ENCODE measurements at regions of chr19 and their contacts with region 1.

Region 1: GRCh38 chr19:56066152-56067023 is 54.7 kb downstream of the ZNF787 start:
- DNase-seq: peak; percentile 65 to 84
- H3K4me3 ChIP-seq: peak overlapping the region; percentile 19
- H3K4me1 ChIP-seq: no peaks in the 10 kb centered on the region; the same call in 1 of the 2 replicates
- H3K27me3 ChIP-seq: no peaks in the 10 kb centered on the region

Region 2: GRCh38 chr19:55973982-55974381 is 92.4 kb before region 1 on chr19:
- in situ Hi-C with region 1: no loop called
- DNase-seq: no peak
- H3K4me3 ChIP-seq: no peak overlapping the region
- H3K4me1 ChIP-seq: no peaks in the 10 kb centered on the region
- H3K27me3 ChIP-seq: no peaks in the 10 kb centered on the region

Region 3: DNA sequence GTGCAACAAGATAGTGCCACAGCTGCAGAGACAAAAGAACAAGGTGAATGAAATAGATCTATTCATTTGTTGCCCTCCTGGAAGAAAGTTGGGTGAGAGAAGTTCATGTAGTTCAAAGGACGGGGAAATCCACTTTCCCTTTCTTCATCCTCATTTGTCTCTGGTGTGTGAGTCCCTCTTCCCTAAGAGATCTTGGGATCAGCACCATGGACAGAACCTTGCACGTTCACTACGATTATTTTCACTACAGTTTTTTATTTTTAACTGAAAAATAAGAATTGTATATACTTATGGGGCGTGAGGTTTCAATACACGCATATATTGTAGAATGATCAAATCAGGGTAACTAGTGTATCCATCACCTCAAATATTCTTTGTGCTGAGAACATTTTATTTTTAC is 50.6 kb before region 1 on chr19:
- in situ Hi-C with region 1: no loop called
- DNase-seq: peak in 1 of 2 experiments; percentile 14
- H3K4me3 ChIP-seq: no peak overlapping the region
- H3K4me1 ChIP-seq: no peaks in the 10 kb centered on the region
- H3K27me3 ChIP-seq: no peaks in the 10 kb centered on the region

Region 4: DNA sequence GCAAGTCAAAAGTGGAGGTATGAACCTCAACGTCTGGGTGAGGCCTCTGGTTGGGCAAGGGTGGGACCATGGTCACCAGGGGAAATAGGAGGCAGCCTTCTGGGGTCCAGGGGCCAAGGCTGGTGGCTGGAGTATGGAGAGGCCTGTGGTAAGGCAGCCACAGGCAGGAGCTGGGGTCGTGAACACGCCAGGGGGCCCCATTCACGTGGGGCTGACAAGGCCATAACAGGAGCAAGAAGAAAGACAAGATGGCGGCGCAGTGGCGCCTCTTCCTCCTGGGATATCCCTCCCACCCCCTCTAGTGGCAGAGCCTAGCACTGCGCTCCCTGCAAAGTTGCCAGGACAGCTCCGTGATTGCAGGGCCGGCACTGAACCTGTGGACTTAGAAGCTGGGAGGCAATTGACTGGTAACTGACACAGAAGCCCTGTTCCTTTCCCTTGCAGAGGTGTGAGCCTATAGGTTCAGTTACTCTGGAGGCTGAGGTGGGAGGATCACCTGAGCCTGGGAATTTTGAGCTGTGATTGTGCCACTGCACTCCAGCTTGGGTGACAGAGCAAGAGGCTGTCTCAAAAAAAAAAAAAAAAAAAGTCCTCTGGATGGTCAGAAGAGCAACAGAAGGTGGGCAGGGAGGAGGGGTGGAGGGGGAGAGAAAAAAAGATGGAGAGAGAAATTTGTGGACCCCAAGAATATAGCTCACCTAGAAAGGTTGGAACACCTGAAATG is 186.5 kb after region 1 on chr19:
- in situ Hi-C with region 1: loop called (anchors 10 kb)
- DNase-seq: peak; percentile 58 to 93
- H3K4me3 ChIP-seq: no peak overlapping the region
- H3K4me1 ChIP-seq: no peaks in the 10 kb centered on the region; the same call in 1 of the 2 replicates
- H3K27me3 ChIP-seq: no peaks in the 10 kb centered on the region

Measured in HAP-1 (cell line).